ENCODE measurements at regions of chr5 and their contacts with region 1.

Region 1: DNA sequence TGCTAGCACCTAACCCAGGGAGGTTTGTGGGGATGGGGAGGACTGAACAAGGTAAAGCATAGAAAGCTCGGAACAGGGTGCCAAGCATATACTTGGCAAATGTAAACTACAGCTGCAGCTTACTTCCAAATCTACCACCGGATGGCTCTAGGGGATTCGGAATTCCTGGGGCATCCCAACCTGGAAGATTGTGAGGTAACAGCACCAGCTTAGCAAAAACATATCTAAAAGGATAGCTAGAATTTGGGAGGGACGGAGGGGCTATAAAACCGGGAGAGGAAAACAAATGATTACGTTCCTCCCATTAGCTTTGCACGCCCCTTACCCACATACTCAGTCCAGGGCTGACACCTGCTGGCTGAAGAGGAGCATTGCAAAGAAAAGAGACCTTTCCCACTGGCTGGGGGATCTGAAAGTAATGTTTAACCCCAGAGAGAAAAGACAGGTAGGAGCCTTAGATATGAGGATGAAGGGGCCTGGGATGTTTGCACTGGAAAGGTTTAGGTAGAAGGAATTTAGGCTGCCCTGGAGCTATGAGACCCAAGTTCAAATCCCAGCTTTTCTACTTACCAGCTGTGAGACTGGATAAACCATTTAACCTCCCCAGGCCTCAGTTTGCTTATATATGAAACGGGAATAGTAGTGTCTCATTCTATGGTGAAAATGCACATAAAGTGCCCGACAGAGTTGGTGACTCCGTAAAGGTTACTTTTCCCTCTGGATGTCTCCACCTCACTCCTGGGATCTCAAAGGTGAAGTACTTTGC is 73.6 kb downstream of the FAM114A2 start:
- DNase-seq: peak; percentile 91
- H3K4me3 Mint-ChIP-seq: peak overlapping the region; percentile 32
- H3K27ac Mint-ChIP-seq: no peak overlapping the region
- H3K4me1 Mint-ChIP-seq: peaks cover 6% of the 10 kb centered on the region
- H3K27me3 Mint-ChIP-seq: no peaks in the 10 kb centered on the region
- CTCF ChIP-seq: peak; percentile 96

Region 2: DNA sequence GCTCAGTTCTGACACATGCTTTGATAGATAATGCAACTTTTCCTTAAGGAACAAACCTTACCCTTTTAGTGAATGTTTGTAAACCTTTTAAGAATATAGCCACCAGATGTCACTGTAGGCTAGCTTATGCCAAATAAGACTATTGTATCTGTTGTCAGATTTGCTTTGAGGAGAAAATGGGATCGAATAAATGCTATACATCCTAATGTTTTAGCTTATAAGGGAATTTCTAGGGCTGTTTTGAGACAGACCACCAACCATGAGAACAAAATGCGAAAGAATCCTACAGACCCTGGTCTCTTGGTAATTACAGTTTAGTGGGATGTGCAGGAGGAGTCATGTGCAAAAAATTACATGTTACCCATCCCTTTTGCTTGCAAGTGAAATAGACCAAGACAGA is 1432.3 kb before region 1 on chr5:
- CTCF ChIA-PET with region 1: interaction called, 160 read pairs
- POLR2A ChIA-PET with region 1: interaction called, 8 read pairs
- intact Hi-C with region 1: loop called (anchors 1 kb)
- DNase-seq: peak; percentile 75
- H3K4me3 Mint-ChIP-seq: no peak overlapping the region
- H3K27ac Mint-ChIP-seq: peak overlapping the region; percentile 24
- H3K4me1 Mint-ChIP-seq: no peaks in the 10 kb centered on the region
- H3K27me3 Mint-ChIP-seq: no peaks in the 10 kb centered on the region
- CTCF ChIP-seq: peak; percentile 80

Region 3: GRCh38 chr5:153147891-153148623 is 817.0 kb before region 1 on chr5:
- CTCF ChIA-PET with region 1: interaction called, 58 read pairs
- POLR2A ChIA-PET with region 1: no interaction called
- intact Hi-C with region 1: loop called (anchors 1 kb)
- DNase-seq: peak; percentile 82
- H3K4me3 Mint-ChIP-seq: peak overlapping the region; percentile 11
- H3K27ac Mint-ChIP-seq: no peak overlapping the region
- H3K4me1 Mint-ChIP-seq: peaks cover 14% of the 10 kb centered on the region
- H3K27me3 Mint-ChIP-seq: no peaks in the 10 kb centered on the region
- CTCF ChIP-seq: peak; percentile 87

Region 4: GRCh38 chr5:153480401-153480800 is 484.7 kb before region 1 on chr5:
- CTCF ChIA-PET with region 1: interaction called, 40 read pairs
- POLR2A ChIA-PET with region 1: interaction called, 3 read pairs
- intact Hi-C with region 1: no loop called
- DNase-seq: peak; percentile 65
- H3K4me3 Mint-ChIP-seq: no peak overlapping the region
- H3K27ac Mint-ChIP-seq: no peak overlapping the region
- H3K4me1 Mint-ChIP-seq: peaks cover 25% of the 10 kb centered on the region
- H3K27me3 Mint-ChIP-seq: no peaks in the 10 kb centered on the region
- CTCF ChIP-seq: no peak

Region 5: DNA sequence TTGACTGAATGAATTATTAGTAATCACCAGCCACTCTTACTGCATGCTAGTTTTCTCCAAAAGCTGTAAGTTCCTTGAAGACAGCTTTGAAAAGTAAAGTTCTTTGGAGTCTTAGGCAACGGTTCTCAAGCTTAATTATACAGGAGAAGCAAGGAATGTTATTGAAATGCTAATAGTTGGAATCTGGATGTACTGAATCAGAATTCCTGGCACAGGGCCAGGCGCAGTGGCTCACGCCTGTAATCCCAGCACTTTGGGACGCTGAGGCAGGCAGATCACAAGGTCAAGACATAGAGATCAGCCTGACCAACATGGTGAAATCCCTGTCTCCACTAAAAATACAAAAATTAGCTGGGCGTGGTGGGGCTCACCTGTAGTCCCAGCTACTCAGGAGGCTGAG is 441.2 kb before region 1 on chr5:
- CTCF ChIA-PET with region 1: interaction called, 15 read pairs
- POLR2A ChIA-PET with region 1: no interaction called
- intact Hi-C with region 1: no loop called
- DNase-seq: peak; percentile 82
- H3K4me3 Mint-ChIP-seq: no peak overlapping the region
- H3K27ac Mint-ChIP-seq: no peak overlapping the region
- H3K4me1 Mint-ChIP-seq: peaks cover 15% of the 10 kb centered on the region
- H3K27me3 Mint-ChIP-seq: no peaks in the 10 kb centered on the region
- CTCF ChIP-seq: no peak

Region 6: DNA sequence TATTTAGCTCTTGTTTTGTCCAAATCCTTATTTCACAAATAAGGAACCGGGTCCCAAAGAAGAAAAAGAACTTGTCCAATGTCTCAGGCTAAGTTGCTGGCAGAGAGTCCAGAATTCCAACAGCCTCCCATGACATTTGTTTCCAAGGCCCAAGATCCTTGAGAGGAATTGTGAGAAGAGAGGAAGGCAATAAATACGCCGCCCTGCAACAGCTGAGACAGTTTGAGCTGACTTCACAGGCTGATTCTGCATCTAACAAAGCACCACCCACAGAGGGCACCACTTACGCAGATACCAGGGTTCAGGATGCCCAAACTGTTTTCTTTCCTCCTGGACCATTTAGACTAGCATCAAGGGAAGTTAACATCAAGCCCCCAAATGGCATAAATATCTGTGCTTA is 137.7 kb before region 1 on chr5:
- CTCF ChIA-PET with region 1: interaction called, 6 read pairs
- POLR2A ChIA-PET with region 1: no interaction called
- intact Hi-C with region 1: loop called (anchors 5 kb)
- DNase-seq: peak; percentile 17
- H3K4me3 Mint-ChIP-seq: no peak overlapping the region
- H3K27ac Mint-ChIP-seq: no peak overlapping the region
- H3K4me1 Mint-ChIP-seq: peaks cover 6% of the 10 kb centered on the region
- H3K27me3 Mint-ChIP-seq: no peaks in the 10 kb centered on the region
- CTCF ChIP-seq: peak; percentile 27

Region 7: DNA sequence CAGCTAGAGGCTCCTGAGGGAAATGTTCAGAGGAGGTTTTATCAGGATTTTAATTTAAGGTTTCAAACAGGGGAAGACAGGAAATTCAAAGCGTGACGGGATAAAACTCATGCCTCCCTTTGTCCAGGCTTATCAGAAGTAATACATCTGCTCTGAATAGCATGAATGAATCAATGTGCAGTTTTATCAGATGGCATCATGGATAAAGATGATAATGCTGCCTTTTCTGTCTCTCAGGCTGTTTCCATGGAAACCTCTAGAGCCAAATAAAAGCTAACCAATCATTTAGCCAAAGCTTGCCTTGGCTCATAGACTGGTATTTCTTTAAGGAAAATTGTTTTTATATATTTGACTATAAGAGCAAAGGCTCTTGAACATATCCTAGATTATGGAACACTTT is 90.1 kb after region 1 on chr5:
- CTCF ChIA-PET with region 1: no interaction called
- POLR2A ChIA-PET with region 1: no interaction called
- intact Hi-C with region 1: no loop called
- DNase-seq: no peak
- H3K4me3 Mint-ChIP-seq: no peak overlapping the region
- H3K27ac Mint-ChIP-seq: no peak overlapping the region
- H3K4me1 Mint-ChIP-seq: peaks cover 7% of the 10 kb centered on the region
- H3K27me3 Mint-ChIP-seq: no peaks in the 10 kb centered on the region
- CTCF ChIP-seq: no peak

Region 8: DNA sequence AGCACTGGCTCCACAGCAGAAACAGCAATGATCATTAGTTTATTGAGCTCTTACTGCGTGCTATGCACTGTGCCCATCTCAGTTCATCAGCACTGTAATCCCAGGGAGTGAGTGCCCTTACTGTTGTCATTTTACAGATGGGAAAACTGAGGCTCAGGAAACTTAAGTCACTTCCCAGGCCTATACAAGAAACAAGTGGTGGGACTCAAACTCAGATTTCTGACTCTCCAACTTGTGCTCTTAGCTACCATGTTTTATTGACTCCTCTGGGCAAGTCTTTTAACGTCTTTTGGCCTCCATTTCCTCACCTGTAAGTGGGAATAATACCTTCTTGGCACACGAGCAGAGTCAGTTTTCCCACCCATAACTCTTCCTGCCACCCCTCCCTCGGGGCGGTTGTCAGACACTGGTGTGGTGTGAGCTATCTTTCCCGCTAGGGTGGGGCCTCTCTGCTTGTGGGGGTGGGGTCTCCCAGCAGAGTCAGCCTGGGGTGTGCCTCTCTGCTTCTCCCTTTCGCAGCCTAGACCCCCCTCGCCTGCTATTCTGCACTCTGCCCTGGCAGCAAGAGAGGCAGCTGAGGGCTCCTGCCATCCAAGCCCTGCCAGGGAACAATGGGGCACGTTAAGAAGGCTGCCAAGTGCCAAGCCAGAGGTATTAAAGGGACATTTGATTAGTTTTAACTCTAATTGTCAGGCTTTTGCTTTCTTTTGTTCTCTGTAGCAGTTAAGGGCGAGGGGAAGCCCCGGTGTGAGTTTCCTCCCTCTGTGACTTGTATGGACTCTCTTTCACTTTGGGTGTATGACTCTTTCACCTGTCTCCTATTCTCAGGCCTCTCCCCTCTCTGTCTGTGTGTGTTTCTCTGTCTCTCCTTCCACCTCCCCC is 237.6 kb after region 1 on chr5:
- CTCF ChIA-PET with region 1: no interaction called
- POLR2A ChIA-PET with region 1: no interaction called
- intact Hi-C with region 1: no loop called
- DNase-seq: no peak
- H3K4me3 Mint-ChIP-seq: no peak overlapping the region
- H3K27ac Mint-ChIP-seq: peak overlapping the region; percentile 62
- H3K4me1 Mint-ChIP-seq: peaks cover 29% of the 10 kb centered on the region
- H3K27me3 Mint-ChIP-seq: no peaks in the 10 kb centered on the region
- CTCF ChIP-seq: no peak